Caco-2 (cell line): ENCODE measurements at regions of chr12 and their contacts with region 1.

Region 1: DNA sequence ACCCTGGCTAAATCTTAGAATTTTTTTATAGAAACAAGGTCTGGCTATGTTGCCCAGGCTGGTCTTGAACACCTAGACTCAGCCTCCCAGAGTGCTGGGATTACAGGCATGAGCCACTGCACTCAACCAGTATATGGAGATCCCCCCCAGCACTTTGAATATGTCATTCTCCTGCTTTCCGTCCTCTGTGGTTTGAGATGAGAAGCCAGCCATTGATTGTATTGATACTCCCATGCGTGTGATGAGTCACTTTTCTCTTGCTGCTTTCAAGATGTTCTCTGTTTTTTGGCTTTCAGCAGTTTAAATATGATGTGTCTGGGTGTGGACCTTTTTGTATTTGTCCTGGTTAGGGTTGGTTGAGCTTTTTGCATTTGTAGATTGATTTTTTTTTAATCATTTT is 75.2 kb upstream of the DNM1L start:
- DNase-seq: no peak
- H3K4me3 ChIP-seq: no peak overlapping the region
- H3K4me3 Mint-ChIP-seq: no peak overlapping the region
- H3K27ac Mint-ChIP-seq: peak overlapping the region; percentile 64
- H3K4me1 ChIP-seq: peaks cover 29% of the 10 kb centered on the region
- H3K4me1 Mint-ChIP-seq: peaks cover 29% of the 10 kb centered on the region
- H3K27me3 ChIP-seq: no peaks in the 10 kb centered on the region
- H3K27me3 Mint-ChIP-seq: no peaks in the 10 kb centered on the region
- CTCF ChIP-seq: no peak

Region 2: DNA sequence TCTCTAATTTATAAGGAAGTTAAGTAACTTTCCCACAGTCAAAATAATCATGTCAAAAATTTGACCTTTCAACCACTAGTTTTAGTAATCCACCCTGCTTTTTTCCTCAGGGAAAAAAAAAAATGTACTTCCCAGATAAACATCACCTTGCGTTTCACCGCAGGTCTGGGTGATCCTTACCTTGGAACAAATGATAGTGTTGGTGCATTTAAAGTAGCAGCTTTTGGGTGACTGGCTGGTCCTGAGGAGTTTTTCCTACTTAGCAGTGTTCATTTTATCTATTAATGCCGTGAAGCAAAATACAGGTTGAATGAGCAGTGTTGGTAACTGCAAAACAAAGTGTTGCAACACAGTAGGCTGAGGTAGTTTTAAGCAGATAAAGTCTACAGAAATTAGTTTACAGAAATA is 62.0 kb before region 1 on chr12:
- CTCF ChIA-PET with region 1: no interaction called
- POLR2A ChIA-PET with region 1: no interaction called
- intact Hi-C with region 1: loop called (anchors 2 kb)
- DNase-seq: no peak
- H3K4me3 ChIP-seq: no peak overlapping the region
- H3K4me3 Mint-ChIP-seq: no peak overlapping the region
- H3K27ac Mint-ChIP-seq: peak overlapping the region; percentile 39
- H3K4me1 ChIP-seq: peaks cover 39% of the 10 kb centered on the region
- H3K4me1 Mint-ChIP-seq: peaks cover 22% of the 10 kb centered on the region
- H3K27me3 ChIP-seq: no peaks in the 10 kb centered on the region
- H3K27me3 Mint-ChIP-seq: no peaks in the 10 kb centered on the region
- CTCF ChIP-seq: no peak

Region 3: GRCh38 chr12:32627976-32628375 is 24.1 kb after region 1 on chr12:
- CTCF ChIA-PET with region 1: no interaction called
- POLR2A ChIA-PET with region 1: no interaction called
- intact Hi-C with region 1: no loop called
- DNase-seq: no peak
- H3K4me3 ChIP-seq: no peak overlapping the region
- H3K4me3 Mint-ChIP-seq: no peak overlapping the region
- H3K27ac Mint-ChIP-seq: no peak overlapping the region
- H3K4me1 ChIP-seq: no peaks in the 10 kb centered on the region
- H3K4me1 Mint-ChIP-seq: no peaks in the 10 kb centered on the region
- H3K27me3 ChIP-seq: no peaks in the 10 kb centered on the region
- H3K27me3 Mint-ChIP-seq: no peaks in the 10 kb centered on the region
- CTCF ChIP-seq: no peak